ENCODE measurements at regions of chr11 and their contacts with region 1.

Region 1: DNA sequence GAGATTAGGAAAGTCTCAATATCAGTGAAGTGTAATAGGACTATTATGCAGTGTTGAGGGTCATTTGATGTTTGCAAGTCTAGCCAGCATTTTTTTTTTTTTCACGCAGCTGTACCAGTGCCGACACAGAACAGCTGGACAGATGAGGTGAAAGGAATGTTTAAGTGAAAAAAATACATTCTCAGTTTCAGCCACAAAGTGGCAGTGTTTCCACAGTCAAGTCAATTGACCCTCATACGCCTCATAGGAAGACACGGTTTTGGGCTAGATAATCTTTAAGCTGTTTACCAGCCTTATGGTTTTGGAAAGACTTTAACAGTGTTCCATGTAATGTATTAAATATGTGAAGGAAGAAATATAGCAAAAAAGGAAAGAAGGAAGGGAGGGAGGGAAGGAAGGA is 349.9 kb upstream of the ANO3 start:
- DNase-seq: peak; percentile 77
- ATAC-seq: peak; percentile 87
- H3K4me3 ChIP-seq: no peak overlapping the region
- H3K27ac ChIP-seq: no peak overlapping the region
- H3K4me1 ChIP-seq: no peaks in the 10 kb centered on the region
- H3K27me3 ChIP-seq: no peaks in the 10 kb centered on the region
- CTCF ChIP-seq: peak; percentile 77
- POLR2A ChIP-seq: no peak
- RAD21 ChIP-seq: peak; percentile 84

Region 2: GRCh38 chr11:24496736-24497725 is 1485.0 kb before region 1 on chr11 and contains the start of gene LUZP2:
- CTCF ChIA-PET with region 1: no interaction called
- POLR2A ChIA-PET with region 1: no interaction called
- dilution Hi-C with region 1: no loop called
- in situ Hi-C with region 1: no loop called
- intact Hi-C with region 1: loop called (anchors 10 kb)
- DNase-seq: peak; percentile 51
- ATAC-seq: peak; percentile 96
- H3K4me3 ChIP-seq: peak within 1 kb of the TSS; percentile 61
- H3K27ac ChIP-seq: peak within 1 kb of the TSS; percentile 2; the same call in 1 of the 2 replicates
- H3K4me1 ChIP-seq: no peaks in the 10 kb centered on the region; the same call in 1 of the 2 replicates
- H3K27me3 ChIP-seq: no peaks in the 10 kb centered on the region
- CTCF ChIP-seq: no peak
- POLR2A ChIP-seq: no peak
- RAD21 ChIP-seq: no peak; the same call in 1 of the 2 replicates
- total RNA-seq, gene LUZP2: 2.0 and 2.2 TPM in 2 replicates

Region 3: DNA sequence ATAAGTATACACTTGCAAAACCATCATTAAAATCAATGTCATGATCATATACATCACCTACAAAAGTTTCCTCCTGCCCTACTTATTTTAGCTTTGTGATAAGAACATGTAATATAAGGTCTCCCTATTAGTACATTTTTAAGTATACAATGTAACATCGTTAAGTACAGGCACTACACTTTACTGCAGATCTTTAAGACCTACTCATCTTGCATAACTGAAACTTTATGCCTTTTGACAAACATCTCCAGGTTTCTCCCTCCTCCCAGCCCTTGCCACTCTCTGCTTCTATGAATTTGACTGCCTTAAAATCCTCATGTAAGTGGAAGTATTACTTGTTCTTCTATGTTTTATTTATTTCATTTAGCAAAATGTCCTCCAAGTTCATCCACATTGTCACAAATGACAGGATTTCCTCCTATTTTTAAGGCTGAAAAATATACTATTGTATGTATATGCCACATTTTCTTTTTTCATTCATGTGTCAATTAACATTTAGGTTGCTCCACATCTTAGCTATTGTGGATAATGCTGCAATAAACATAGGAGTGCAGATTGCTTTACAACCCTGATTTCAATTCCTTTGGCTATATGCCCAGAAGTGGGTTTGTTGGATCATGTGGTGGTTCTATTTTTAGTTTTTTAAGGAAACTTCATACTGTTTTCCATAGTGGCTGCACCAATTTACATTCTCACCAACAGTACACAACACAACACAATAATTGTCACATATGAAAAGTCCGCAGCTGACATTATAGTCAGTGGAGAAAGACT is 121.1 kb before region 1 on chr11:
- CTCF ChIA-PET with region 1: no interaction called
- POLR2A ChIA-PET with region 1: no interaction called
- dilution Hi-C with region 1: no loop called
- in situ Hi-C with region 1: no loop called
- intact Hi-C with region 1: no loop called
- DNase-seq: peak; percentile 15
- ATAC-seq: no peak
- H3K4me3 ChIP-seq: no peak overlapping the region
- H3K27ac ChIP-seq: no peak overlapping the region
- H3K4me1 ChIP-seq: no peaks in the 10 kb centered on the region
- H3K27me3 ChIP-seq: no peaks in the 10 kb centered on the region
- CTCF ChIP-seq: no peak
- POLR2A ChIP-seq: no peak
- RAD21 ChIP-seq: no peak

Region 4: DNA sequence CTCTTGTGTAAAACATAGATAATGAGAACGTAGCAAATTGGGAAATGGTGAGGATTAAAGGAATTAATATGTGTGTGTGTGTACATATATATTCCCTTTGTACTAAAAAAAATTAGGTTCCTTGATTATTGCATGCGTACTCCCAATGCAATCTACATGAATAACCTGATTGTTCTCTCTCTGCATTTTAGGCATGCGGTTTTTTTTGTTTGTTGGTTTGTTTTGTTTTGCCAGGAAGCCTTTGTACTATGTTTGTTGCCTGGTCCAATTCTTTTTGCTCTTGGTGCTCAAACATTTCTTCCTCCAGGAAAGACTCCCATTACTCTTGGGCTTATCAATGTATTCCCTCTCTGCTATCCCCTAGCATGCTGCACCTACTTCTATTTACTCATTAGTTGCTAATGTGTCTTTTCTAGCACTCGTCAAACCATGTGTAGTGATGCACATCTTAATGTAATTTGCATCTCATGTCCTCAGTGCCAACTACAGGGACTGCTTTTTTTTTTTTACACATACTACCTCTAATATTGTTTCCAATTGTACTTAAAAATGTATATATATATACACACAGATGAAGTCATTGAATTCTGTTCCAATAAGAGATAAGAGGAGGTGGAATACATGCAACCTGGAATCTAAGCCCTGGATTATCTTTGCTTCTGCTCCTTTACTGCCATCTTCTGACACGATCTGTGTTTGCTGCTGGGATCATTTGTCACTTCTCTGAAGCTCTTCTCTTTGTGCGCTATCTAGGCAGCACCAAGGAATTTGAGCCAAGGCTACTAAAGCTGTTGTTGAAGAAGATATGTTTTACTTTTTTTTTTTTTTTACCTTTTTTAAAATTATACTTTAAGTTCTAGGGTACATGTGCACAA is 152.7 kb after region 1 on chr11:
- CTCF ChIA-PET with region 1: interaction called, 14 read pairs
- POLR2A ChIA-PET with region 1: no interaction called
- dilution Hi-C with region 1: no loop called
- in situ Hi-C with region 1: no loop called
- intact Hi-C with region 1: loop called (anchors 1 kb)
- DNase-seq: peak; percentile 38
- ATAC-seq: peak; percentile 89
- H3K4me3 ChIP-seq: no peak overlapping the region
- H3K27ac ChIP-seq: no peak overlapping the region
- H3K4me1 ChIP-seq: no peaks in the 10 kb centered on the region
- H3K27me3 ChIP-seq: no peaks in the 10 kb centered on the region
- CTCF ChIP-seq: no peak; the same call in 1 of the 2 replicates
- POLR2A ChIP-seq: no peak
- RAD21 ChIP-seq: peak; percentile 38

Region 5: GRCh38 chr11:26219183-26220117 is 237.5 kb after region 1 on chr11:
- CTCF ChIA-PET with region 1: interaction called, 8 read pairs
- POLR2A ChIA-PET with region 1: no interaction called
- dilution Hi-C with region 1: no loop called
- in situ Hi-C with region 1: loop called (anchors 5 kb)
- intact Hi-C with region 1: loop called (anchors 2 kb)
- DNase-seq: peak; percentile 54
- ATAC-seq: peak; percentile 80
- H3K4me3 ChIP-seq: no peak overlapping the region
- H3K27ac ChIP-seq: peak overlapping the region; percentile 49; the same call in 1 of the 2 replicates
- H3K4me1 ChIP-seq: 0 out of 2 replicates have a peak, but pooled peaks cover 2% of the 10 kb centered on the region
- H3K27me3 ChIP-seq: no peaks in the 10 kb centered on the region
- CTCF ChIP-seq: no peak
- POLR2A ChIP-seq: no peak
- RAD21 ChIP-seq: no peak

Region 6: GRCh38 chr11:26276798-26277424 is 294.9 kb after region 1 on chr11:
- CTCF ChIA-PET with region 1: interaction called, 8 read pairs
- POLR2A ChIA-PET with region 1: no interaction called
- dilution Hi-C with region 1: no loop called
- in situ Hi-C with region 1: loop called (anchors 5 kb)
- intact Hi-C with region 1: loop called (anchors 1 kb)
- DNase-seq: peak; percentile 71
- ATAC-seq: peak; percentile 96
- H3K4me3 ChIP-seq: no peak overlapping the region
- H3K27ac ChIP-seq: no peak overlapping the region
- H3K4me1 ChIP-seq: no peaks in the 10 kb centered on the region
- H3K27me3 ChIP-seq: no peaks in the 10 kb centered on the region
- CTCF ChIP-seq: peak; percentile 98
- POLR2A ChIP-seq: peak; percentile 30; the same call in 1 of the 2 replicates
- RAD21 ChIP-seq: peak; percentile 97